ENCODE measurements at regions of chr5 and their contacts with region 1.

Region 1: GRCh38 chr5:149166128-149166527 is 24.8 kb downstream of the ABLIM3 start:
- DNase-seq: no peak
- H3K4me3 ChIP-seq: no peak overlapping the region
- H3K27ac ChIP-seq: no peak overlapping the region
- H3K4me1 ChIP-seq: no peaks in the 10 kb centered on the region
- H3K27me3 ChIP-seq: no peaks in the 10 kb centered on the region
- CTCF ChIP-seq: no peak
- POLR2A ChIP-seq: no peak

Region 2: DNA sequence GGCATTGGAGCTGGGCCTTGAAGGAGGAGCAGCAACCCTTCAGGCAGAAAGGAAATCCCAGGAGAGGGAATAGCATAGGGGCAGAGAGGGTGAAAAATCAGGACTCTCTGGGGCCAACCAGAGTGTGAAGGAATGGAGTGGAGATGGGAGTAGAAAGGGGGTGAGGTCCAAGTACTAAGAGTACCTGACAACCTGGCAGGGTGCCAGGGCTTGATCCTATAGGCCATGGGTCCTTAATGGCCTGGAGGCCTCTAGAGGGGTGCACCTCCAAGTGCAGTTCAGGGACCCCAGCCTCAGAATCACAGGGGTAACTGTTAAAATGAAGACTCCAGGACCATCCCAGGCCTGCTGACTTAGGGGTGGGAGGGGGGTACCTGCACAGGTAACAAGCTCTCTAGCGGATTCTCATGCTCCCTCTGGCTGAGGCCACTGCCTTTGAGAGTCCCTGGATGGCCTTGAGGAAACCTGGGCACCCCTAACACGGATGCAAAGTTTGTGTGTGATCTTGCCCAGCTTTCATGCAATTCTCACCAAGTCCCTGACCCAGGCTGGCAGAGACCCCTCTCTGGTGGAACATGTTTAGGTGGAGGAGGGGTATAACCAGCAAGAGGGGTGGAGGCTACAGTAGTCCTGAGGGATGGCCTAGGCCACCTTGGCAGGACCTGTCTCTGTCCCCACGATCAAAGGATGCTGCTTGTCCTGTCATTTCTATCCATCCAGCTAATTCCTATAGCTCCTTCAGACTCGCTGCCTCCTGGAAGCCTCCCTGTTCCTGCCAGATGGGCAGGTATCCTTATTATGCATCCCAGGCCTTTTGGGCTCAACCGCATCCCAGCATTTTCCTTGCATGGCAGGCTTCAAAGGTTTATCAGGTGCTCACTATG is 937.8 kb after region 1 on chr5:
- intact Hi-C with region 1: loop called (anchors 5 kb)
- DNase-seq: no peak
- H3K4me3 ChIP-seq: no peak overlapping the region
- H3K27ac ChIP-seq: no peak overlapping the region
- H3K4me1 ChIP-seq: no peaks in the 10 kb centered on the region
- H3K27me3 ChIP-seq: no peaks in the 10 kb centered on the region
- CTCF ChIP-seq: no peak
- POLR2A ChIP-seq: no peak